ENCODE measurements at regions of chr17 and their contacts with region 1.

Region 1: GRCh38 chr17:37233036-37233435 is 142.7 kb upstream of the C17orf78 start:
- DNase-seq: no peak
- H3K4me3 ChIP-seq: no peak overlapping the region
- H3K27ac ChIP-seq: no peak overlapping the region
- H3K4me1 ChIP-seq: no peaks in the 10 kb centered on the region
- H3K27me3 ChIP-seq: no peaks in the 10 kb centered on the region
- CTCF ChIP-seq: no peak
- POLR2A ChIP-seq: no peak

Region 2: DNA sequence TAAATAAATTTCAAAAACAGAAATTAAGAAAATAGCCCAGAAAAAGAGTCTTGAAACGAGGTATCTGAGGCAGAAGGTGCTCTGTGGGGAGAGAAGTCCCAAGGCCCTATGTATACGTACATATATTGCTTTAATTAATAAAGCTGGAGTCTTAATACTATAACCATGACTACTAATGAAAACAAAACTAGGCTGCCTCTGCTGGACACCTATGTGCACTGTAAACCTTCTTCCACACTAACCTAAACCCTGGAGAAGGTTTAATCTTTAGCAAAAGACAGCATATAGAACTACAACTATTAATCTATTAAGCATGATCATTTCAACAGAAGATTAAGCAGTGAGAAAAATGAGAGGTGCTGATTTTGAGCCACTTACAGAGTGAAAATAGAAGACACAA is 11.2 kb before region 1 on chr17:
- CTCF ChIA-PET with region 1: interaction called, 16 read pairs
- POLR2A ChIA-PET with region 1: no interaction called
- dilution Hi-C with region 1: no loop called
- intact Hi-C with region 1: no loop called
- DNase-seq: no peak
- H3K4me3 ChIP-seq: no peak overlapping the region
- H3K27ac ChIP-seq: no peak overlapping the region
- H3K4me1 ChIP-seq: no peaks in the 10 kb centered on the region
- H3K27me3 ChIP-seq: no peaks in the 10 kb centered on the region
- CTCF ChIP-seq: no peak
- POLR2A ChIP-seq: no peak